T-cell (primary cell): ENCODE measurements at regions of chr2 and their contacts with region 1.

Region 1: GRCh38 chr2:74147727-74148456 is at the start of gene BOLA3:
- DNase-seq: peak; percentile 38 to 84 (median 63)
- ATAC-seq: peak; percentile 90 to 98 (median 97)
- H3K4me3 ChIP-seq: peak within 1 kb of the TSS; percentile 64 to 70
- H3K4me3 Mint-ChIP-seq: no peak within 1 kb of the TSS
- H3K27ac ChIP-seq: peak within 1 kb of the TSS; percentile 64
- H3K27ac Mint-ChIP-seq: no peak within 1 kb of the TSS
- H3K4me1 ChIP-seq: peaks cover 6 to 26% of the 10 kb centered on the region in 2 experiments
- H3K4me1 Mint-ChIP-seq: peaks cover 0 to 5% (median 0%) of the 10 kb centered on the region in 3 donors
- H3K27me3 ChIP-seq: no peaks in the 10 kb centered on the region
- H3K27me3 Mint-ChIP-seq: no peaks in the 10 kb centered on the region
- total RNA-seq, gene BOLA3: 13.7 to 16.0 (median 15.5) TPM

Region 2: GRCh38 chr2:74092275-74092674 is 55.6 kb before region 1 on chr2:
- CTCF ChIA-PET with region 1: interaction called in 1 of 2 experiments, 5 read pairs
- POLR2A ChIA-PET with region 1: interaction called in 1 of 2 experiments, 10 read pairs
- DNase-seq: no peak
- ATAC-seq: no peak
- H3K4me3 ChIP-seq: no peak overlapping the region
- H3K4me3 Mint-ChIP-seq: no peak overlapping the region
- H3K27ac ChIP-seq: no peak overlapping the region
- H3K27ac Mint-ChIP-seq: no peak overlapping the region
- H3K4me1 ChIP-seq: no peaks in the 10 kb centered on the region
- H3K4me1 Mint-ChIP-seq: no peaks in the 10 kb centered on the region
- H3K27me3 ChIP-seq: no peaks in the 10 kb centered on the region
- H3K27me3 Mint-ChIP-seq: no peaks in the 10 kb centered on the region

Region 3: GRCh38 chr2:74406035-74406434 is 258.1 kb after region 1 on chr2:
- CTCF ChIA-PET with region 1: no interaction called
- POLR2A ChIA-PET with region 1: no interaction called
- DNase-seq: no peak
- ATAC-seq: no peak
- H3K4me3 ChIP-seq: no peak overlapping the region
- H3K4me3 Mint-ChIP-seq: no peak overlapping the region
- H3K27ac ChIP-seq: no peak overlapping the region
- H3K27ac Mint-ChIP-seq: no peak overlapping the region
- H3K4me1 ChIP-seq: no peaks in the 10 kb centered on the region
- H3K4me1 Mint-ChIP-seq: no peaks in the 10 kb centered on the region
- H3K27me3 ChIP-seq: peaks cover 0 to 14% of the 10 kb centered on the region in 2 experiments
- H3K27me3 Mint-ChIP-seq: peaks cover 4 to 10% of the 10 kb centered on the region in 2 donors